Upper lobe of right lung (tissue), 1 donor: ENCODE measurements at regions of chr17 and their contacts with region 1.

Region 1: GRCh38 chr17:20116683-20117309 is 107.6 kb downstream of the SPECC1 start:
- DNase-seq: no peak
- ATAC-seq: peak; percentile 90
- H3K4me3 ChIP-seq: no peak overlapping the region
- H3K27ac ChIP-seq: no peak overlapping the region
- H3K4me1 ChIP-seq: peaks cover 2% of the 10 kb centered on the region
- H3K27me3 ChIP-seq: peaks cover 3% of the 10 kb centered on the region
- CTCF ChIP-seq: peak; percentile 70

Region 2: DNA sequence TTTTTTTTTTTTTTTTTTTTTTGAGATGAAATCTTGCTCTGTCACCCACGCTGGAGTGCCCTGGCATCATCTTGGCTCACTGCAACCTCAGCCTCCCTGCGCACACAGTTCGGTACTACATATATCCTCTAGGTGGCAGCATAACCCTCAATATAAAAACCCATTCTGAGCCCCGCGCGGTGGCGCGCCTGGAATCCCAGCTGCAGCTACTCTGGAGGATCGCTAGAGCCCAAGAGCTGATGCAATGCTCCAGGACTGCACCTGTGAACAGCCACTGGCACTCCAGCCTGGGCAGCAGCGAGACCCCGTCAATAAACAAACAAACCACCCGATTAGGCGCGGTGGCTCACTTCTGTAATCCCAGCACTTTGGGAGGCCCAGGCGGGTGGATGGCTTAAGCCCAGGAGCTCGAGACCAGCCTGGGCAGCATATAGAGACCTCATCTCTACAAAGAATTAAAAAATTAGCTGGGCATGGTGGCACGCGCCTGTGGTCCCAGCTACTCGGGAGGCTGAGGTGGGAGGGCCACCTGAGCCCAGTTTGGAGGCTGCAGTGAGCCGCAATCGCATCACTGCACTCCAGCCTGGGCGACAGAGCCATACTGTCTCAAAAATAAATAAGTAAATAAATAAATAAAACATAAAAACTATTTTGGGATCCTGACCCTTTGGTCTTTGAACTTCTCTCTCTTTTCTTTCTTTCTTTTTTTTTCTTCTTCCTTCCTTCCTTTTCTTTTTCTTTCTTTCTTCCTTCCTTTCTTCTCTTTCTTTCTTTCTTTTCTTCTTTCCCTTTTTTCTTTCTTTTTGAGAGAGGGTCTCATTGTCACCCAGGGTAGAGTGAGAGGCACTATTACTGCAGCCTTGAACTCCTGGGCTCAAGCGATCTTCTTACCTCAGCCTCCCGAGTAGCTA is 123.7 kb before region 1 on chr17:
- intact Hi-C with region 1: loop called (anchors 5 kb)
- DNase-seq: peak; percentile 94
- ATAC-seq: peak; percentile 100
- H3K4me3 ChIP-seq: no peak overlapping the region
- H3K27ac ChIP-seq: no peak overlapping the region
- H3K4me1 ChIP-seq: peaks cover 4% of the 10 kb centered on the region
- H3K27me3 ChIP-seq: no peaks in the 10 kb centered on the region
- CTCF ChIP-seq: peak; percentile 76

Region 3: DNA sequence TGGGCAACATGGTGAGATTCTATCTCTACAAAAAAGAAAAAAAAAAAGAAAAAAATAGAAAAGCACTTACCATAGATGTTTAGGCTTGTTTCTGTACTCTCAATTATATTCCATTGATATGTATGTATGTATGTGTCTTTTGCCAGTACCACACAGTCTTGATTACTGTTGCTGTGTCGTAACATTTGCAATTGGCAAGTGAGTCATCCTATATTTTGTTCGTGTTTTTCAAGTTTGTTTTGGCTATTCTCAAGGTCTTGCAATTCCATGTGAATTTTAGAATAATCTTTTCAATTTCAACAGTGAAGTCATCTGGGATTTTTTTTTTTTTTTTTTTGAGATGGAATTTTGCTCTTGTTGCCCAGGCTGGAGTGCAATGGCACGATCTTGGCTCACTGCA is 88.4 kb before region 1 on chr17:
- intact Hi-C with region 1: no loop called
- DNase-seq: no peak
- ATAC-seq: no peak
- H3K4me3 ChIP-seq: no peak overlapping the region
- H3K27ac ChIP-seq: no peak overlapping the region
- H3K4me1 ChIP-seq: no peaks in the 10 kb centered on the region
- H3K27me3 ChIP-seq: no peaks in the 10 kb centered on the region
- CTCF ChIP-seq: no peak